Spleen (tissue), 13 donors: ENCODE measurements at regions of chr10 and their contacts with region 1.

Region 1: DNA sequence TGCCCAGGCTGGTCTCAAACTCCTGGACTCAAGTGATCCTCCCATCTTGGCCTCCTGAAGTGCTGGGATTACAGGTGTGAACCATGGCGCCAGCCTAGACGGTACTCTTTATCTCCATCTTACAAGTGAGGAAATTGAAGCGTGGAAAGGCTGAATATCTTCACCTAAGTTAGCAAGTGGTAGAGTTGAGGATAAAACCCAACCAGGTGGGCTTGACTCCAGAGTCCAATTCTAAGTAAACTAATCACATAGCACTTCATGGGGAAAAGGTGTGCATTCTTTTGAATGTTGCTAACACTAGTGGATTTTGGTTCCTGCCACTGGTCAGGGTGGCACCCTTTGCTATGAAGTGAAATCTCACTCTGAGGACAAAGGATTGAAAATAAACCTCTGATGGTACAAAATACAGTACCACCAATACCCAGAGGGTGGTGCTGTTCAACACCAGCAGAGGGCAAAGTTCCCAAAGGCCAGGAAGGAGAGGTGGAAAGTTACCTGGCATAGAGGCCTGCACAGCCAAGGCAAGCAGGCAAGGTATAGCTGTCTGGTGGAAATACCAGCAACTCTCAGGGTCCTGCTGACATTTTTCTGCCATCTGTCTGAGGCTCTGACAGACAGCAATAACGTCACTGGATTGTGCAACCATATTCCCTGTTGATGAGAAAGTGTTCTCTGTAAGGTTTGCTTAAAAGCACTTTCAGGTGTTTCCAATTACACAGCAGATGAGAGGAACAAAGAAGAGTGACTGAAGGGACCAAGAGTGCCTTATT is 17.6 kb downstream of the ZDHHC16 start:
- DNase-seq: no peak
- H3K4me3 ChIP-seq: no peak overlapping the region
- H3K27ac ChIP-seq: peak overlapping the region in 5 of 8 donors; percentile 22 to 53 (median 49)
- H3K4me1 ChIP-seq: peaks cover 0 to 15% (median 6%) of the 10 kb centered on the region in 6 donors
- H3K27me3 ChIP-seq: no peaks in the 10 kb centered on the region
- CTCF ChIP-seq: peak; percentile 47 to 84 (median 74)
- POLR2A ChIP-seq: no peak

Region 2: DNA sequence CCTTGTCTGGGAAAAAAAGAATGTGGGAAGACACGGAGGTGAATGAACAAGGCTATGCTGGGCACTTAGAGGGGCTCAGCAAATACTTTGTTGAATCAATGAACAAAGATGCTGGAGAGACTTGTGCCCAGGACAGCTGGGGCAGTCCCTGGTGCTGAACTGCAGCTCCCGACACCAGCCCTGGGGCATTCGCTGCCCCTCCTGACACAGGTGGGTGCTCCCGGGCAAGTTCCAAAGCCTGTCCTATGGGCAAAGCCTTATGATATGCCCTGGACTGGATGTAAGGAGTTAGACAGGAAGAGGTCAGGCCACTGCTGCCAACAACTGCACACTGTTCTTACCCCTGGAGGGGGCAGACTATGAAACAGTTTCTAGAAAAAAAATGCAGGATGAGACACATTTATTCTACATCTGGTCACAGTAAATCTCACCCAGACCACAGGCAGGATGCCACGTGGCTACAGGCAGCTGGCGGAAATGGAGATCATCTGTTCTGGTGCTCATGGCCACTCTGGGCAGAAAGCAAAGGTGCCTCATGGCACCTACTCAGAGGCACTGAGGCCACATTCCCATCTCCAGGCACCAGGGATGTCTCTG is 107.1 kb before region 1 on chr10:
- intact Hi-C with region 1: no loop called
- DNase-seq: peak; percentile 73
- H3K4me3 ChIP-seq: peak overlapping the region in 1 of 8 donors; percentile 52
- H3K27ac ChIP-seq: peak overlapping the region in 7 of 8 donors; percentile 73 to 91 (median 79)
- H3K4me1 ChIP-seq: peaks cover 10 to 55% (median 27%) of the 10 kb centered on the region in 6 donors
- H3K27me3 ChIP-seq: no peaks in the 10 kb centered on the region
- CTCF ChIP-seq: no peak
- POLR2A ChIP-seq: no peak

Region 3: GRCh38 chr10:97553575-97554031 is 90.1 kb after region 1 on chr10:
- intact Hi-C with region 1: loop called (anchors 5 kb)
- DNase-seq: peak; percentile 89
- H3K4me3 ChIP-seq: no peak overlapping the region
- H3K27ac ChIP-seq: no peak overlapping the region
- H3K4me1 ChIP-seq: peaks cover 0 to 9% (median 3%) of the 10 kb centered on the region in 6 donors
- H3K27me3 ChIP-seq: no peaks in the 10 kb centered on the region
- CTCF ChIP-seq: peak; percentile 41 to 84 (median 67)
- POLR2A ChIP-seq: no peak